H1 (cell line): ENCODE measurements at regions of chr1 and their contacts with region 1.

Region 1: DNA sequence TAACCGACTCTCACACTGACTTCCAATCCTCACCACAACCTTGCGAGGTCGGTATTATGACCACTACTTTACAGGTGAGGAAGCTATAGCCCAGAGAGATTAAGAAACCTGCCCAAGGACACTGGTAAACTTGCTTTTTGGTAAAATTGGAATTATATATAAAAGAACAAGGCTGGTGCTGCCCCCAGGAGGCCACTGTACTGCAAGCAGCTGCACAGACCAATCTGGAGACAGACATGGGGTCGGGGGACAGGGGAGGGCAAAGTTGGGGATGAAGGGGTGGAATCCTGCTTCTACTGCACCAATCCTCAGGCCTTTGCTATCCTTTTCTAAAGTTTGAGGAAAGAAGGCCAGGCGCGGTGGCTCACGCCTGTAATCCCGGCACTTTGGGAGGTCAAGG is 280.8 kb downstream of the SPATA17 start:
- DNase-seq: peak in 1 of 2 experiments; percentile 64
- H3K4me3 ChIP-seq: no peak overlapping the region
- H3K27ac ChIP-seq: no peak overlapping the region
- H3K4me1 ChIP-seq: no peaks in the 10 kb centered on the region
- H3K27me3 ChIP-seq: no peaks in the 10 kb centered on the region
- CTCF ChIP-seq: peak; percentile 53 to 56 (median 56)
- EP300 ChIP-seq: no peak
- POLR2A ChIP-seq: no peak
- RAD21 ChIP-seq: peak; percentile 49 to 66; a peak in 3 of 4 replicates

Region 2: DNA sequence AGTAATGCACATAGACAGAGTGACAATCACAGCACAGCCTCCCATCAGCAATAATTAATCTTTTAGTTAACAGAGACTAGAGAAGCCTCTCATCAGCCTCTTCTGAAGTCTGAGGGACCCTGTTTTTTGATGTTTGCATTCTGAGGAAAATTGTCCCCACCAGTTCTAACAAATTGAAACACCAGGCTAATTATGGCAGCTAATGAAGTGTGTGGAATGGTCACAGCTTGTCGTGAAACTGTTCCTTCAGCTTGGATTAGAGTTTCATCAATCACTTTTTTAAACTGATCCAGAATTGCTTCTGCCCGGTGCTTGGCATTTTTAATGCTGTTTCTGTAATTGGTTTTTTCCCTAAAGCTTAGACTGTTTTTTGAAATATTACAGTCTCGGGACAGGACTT is 72.7 kb before region 1 on chr1:
- CTCF ChIA-PET with region 1: no interaction called
- POLR2A ChIA-PET with region 1: no interaction called
- DNase-seq: no peak
- H3K4me3 ChIP-seq: no peak overlapping the region
- H3K27ac ChIP-seq: no peak overlapping the region
- H3K4me1 ChIP-seq: no peaks in the 10 kb centered on the region
- H3K27me3 ChIP-seq: no peaks in the 10 kb centered on the region
- CTCF ChIP-seq: no peak
- EP300 ChIP-seq: no peak
- POLR2A ChIP-seq: no peak
- RAD21 ChIP-seq: no peak

Region 3: DNA sequence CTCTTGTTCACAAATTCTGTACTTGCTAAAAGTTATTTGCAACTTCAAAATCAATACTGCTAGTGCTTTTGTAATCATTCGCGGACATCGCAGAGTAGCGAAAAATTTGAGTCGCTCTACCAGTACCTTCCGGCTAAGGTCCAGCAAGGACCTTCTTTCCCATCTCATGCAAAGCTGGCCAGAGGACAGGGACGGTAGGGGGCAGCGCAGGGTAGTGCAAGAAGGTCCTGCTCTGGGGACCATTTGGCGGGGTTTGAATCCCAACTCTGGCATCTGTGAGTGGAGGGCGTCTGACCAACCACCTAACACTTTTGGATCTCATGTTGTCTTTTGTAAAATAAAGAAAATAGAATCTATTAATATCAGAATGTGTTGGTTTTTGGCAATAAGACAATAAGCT is 22.5 kb before region 1 on chr1:
- CTCF ChIA-PET with region 1: interaction called, 19 read pairs
- POLR2A ChIA-PET with region 1: no interaction called
- DNase-seq: peak; percentile 47 to 86
- H3K4me3 ChIP-seq: no peak overlapping the region
- H3K27ac ChIP-seq: no peak overlapping the region
- H3K4me1 ChIP-seq: no peaks in the 10 kb centered on the region
- H3K27me3 ChIP-seq: no peaks in the 10 kb centered on the region
- CTCF ChIP-seq: peak; percentile 75 to 89 (median 87)
- EP300 ChIP-seq: no peak
- POLR2A ChIP-seq: no peak
- RAD21 ChIP-seq: peak; percentile 97

Region 4: DNA sequence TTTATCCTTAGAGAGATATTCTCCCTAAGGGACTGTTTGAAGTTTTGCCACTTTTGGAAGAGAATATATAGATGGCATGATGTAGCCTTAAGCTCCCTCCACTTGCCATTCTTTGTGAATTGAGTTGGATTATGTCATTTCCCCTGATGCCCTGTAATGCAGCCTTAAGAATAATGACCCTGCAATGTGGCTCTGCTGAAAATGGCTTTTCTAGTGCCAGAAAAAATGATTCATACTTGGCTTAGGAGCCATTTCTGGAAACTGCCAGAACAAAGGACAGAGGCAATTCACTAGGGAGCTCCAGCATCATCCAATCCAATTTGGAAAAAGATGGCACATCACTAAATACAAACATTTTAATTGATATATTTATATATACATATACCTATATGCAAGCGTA is 15.4 kb before region 1 on chr1:
- CTCF ChIA-PET with region 1: interaction called, 40 read pairs
- POLR2A ChIA-PET with region 1: no interaction called
- DNase-seq: no peak
- H3K4me3 ChIP-seq: no peak overlapping the region
- H3K27ac ChIP-seq: no peak overlapping the region
- H3K4me1 ChIP-seq: peaks cover 0 to 2% (median 0%) of the 10 kb centered on the region in 4 experiments; a peak in 1 of 7 replicates
- H3K27me3 ChIP-seq: no peaks in the 10 kb centered on the region
- CTCF ChIP-seq: no peak
- EP300 ChIP-seq: no peak
- POLR2A ChIP-seq: no peak
- RAD21 ChIP-seq: no peak

Region 5: GRCh38 chr1:217929213-217929885 is 17.4 kb after region 1 on chr1:
- CTCF ChIA-PET with region 1: interaction called, 14 read pairs
- POLR2A ChIA-PET with region 1: no interaction called
- DNase-seq: no peak
- H3K4me3 ChIP-seq: no peak overlapping the region
- H3K27ac ChIP-seq: no peak overlapping the region
- H3K4me1 ChIP-seq: peaks cover 0 to 5% (median 0%) of the 10 kb centered on the region in 4 experiments; a peak in 1 of 7 replicates
- H3K27me3 ChIP-seq: no peaks in the 10 kb centered on the region
- CTCF ChIP-seq: no peak
- EP300 ChIP-seq: no peak
- POLR2A ChIP-seq: no peak
- RAD21 ChIP-seq: no peak

Region 6: GRCh38 chr1:217965156-217965786 is 53.4 kb after region 1 on chr1:
- CTCF ChIA-PET with region 1: no interaction called
- POLR2A ChIA-PET with region 1: no interaction called
- DNase-seq: no peak
- H3K4me3 ChIP-seq: no peak overlapping the region
- H3K27ac ChIP-seq: no peak overlapping the region
- H3K4me1 ChIP-seq: peaks cover 0 to 5% (median 0%) of the 10 kb centered on the region in 4 experiments; a peak in 2 of 7 replicates
- H3K27me3 ChIP-seq: no peaks in the 10 kb centered on the region
- CTCF ChIP-seq: no peak
- EP300 ChIP-seq: no peak
- POLR2A ChIP-seq: no peak
- RAD21 ChIP-seq: no peak

Region 7: DNA sequence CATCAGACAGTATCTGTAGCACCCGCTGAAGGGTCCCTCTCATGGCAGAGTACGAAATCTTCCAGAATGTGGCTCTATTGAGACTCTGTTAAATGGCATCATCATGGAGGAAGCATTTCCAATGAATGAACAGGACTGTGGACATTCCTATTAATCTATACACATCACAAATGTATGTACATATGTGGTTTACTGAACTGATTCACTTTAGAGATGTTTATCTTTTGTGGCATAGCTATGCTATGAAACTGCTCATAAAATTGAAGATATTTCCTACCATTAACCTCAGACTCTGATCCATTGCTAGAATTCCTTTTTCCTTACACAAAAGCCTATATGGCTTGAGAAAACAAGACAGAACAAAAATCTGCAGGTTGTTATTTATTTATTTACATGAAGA is 113.5 kb after region 1 on chr1:
- CTCF ChIA-PET with region 1: no interaction called
- POLR2A ChIA-PET with region 1: no interaction called
- DNase-seq: no peak
- H3K4me3 ChIP-seq: no peak overlapping the region
- H3K27ac ChIP-seq: no peak overlapping the region
- H3K4me1 ChIP-seq: peaks cover 0 to 2% (median 0%) of the 10 kb centered on the region in 4 experiments; a peak in 1 of 7 replicates
- H3K27me3 ChIP-seq: no peaks in the 10 kb centered on the region
- CTCF ChIP-seq: no peak
- EP300 ChIP-seq: no peak
- POLR2A ChIP-seq: no peak
- RAD21 ChIP-seq: no peak